Activated CD4-positive, alpha-beta T cell treated with anti-CD3 and anti-CD28 coated beads for 36 hours (primary cell): ENCODE measurements at regions of chr10 and their contacts with region 1.

Region 1: GRCh38 chr10:130190055-130190736 is 54.0 kb downstream of the GLRX3 start:
- DNase-seq: peak; percentile 93
- ATAC-seq: peak; percentile 95
- H3K4me3 Mint-ChIP-seq: no peak overlapping the region
- H3K27ac Mint-ChIP-seq: no peak overlapping the region
- H3K4me1 Mint-ChIP-seq: peaks cover 1% of the 10 kb centered on the region
- H3K27me3 Mint-ChIP-seq: peaks cover 6% of the 10 kb centered on the region

Region 2: DNA sequence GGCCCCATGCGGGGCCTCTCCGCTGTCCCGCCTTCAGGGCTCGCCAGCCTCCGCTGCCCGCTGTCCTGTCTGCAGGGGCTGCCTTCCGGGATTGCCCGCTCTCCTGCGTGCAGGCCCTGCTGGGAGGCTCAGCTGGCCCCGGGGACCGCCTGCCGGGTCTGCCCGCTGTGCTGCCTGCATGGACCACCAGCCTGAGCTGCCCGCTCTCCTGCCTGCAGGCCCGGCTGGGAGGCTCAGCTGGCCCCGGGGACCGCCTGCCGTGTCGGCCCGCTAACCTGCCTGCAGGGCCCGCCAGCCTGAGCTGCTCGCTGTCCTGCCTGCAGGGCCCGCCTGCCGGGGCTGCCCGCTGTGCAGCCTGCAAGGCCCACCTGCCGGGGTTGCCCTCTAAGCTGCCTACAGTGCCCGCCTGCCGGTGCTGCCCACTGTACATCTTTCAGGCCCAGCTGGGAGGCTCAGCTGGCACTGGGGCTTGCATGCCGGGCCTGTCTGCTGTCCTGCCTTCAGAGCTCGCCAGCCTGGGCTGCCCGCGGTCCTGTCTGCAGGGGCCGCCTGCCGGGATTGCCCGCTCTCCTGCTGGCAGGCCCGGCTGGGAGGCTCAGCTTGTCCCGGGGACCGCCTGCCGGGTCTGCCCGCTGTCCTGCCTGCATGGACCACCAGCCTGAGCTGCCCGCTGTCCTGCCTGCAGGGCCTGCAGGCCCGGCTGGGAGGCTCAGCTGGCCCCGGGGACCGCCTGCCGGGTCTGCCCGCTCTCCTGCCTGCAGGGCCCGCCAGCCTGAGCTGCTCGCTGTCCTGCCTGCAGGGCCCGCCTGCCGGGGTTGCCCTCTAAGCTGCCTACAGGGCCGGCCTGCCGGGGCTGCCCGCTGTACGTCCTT is 111.1 kb after region 1 on chr10:
- CTCF ChIA-PET with region 1: interaction called, 4 read pairs
- POLR2A ChIA-PET with region 1: no interaction called
- intact Hi-C with region 1: loop called in 1 of 2 experiments (anchors 1 kb)
- DNase-seq: peak; percentile 89
- ATAC-seq: peak; percentile 68
- H3K4me3 Mint-ChIP-seq: peak overlapping the region; percentile 80
- H3K27ac Mint-ChIP-seq: peak overlapping the region; percentile 75
- H3K4me1 Mint-ChIP-seq: peaks cover 12% of the 10 kb centered on the region
- H3K27me3 Mint-ChIP-seq: no peaks in the 10 kb centered on the region

Region 3: GRCh38 chr10:130333185-130333584 is 143.0 kb after region 1 on chr10:
- CTCF ChIA-PET with region 1: no interaction called
- POLR2A ChIA-PET with region 1: no interaction called
- intact Hi-C with region 1: loop called (anchors 1 to 10 kb)
- DNase-seq: no peak
- ATAC-seq: no peak
- H3K4me3 Mint-ChIP-seq: no peak overlapping the region
- H3K27ac Mint-ChIP-seq: no peak overlapping the region
- H3K4me1 Mint-ChIP-seq: no peaks in the 10 kb centered on the region
- H3K27me3 Mint-ChIP-seq: peaks cover 9% of the 10 kb centered on the region

Region 4: DNA sequence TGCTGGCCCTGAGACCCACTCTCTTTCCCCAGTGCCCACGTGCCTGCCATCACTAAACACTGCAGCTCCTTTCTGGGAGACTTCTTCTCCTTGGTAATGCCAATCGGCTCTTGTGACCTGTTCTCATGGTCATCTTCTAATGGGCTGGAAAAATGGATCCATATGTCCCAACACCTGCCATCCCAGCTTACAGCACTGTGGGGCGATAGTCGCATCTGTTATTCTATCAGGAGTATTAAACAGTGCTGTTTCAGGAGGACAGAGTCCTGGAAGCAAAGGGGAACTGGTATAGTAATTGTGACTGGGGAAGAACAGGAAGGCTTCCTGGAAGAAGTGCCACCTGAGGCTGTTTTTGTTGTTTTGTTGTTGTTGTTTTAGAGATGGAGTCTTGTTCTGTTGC is 357.2 kb after region 1 on chr10:
- CTCF ChIA-PET with region 1: no interaction called
- POLR2A ChIA-PET with region 1: no interaction called
- intact Hi-C with region 1: loop called in 1 of 2 experiments (anchors 5 kb)
- DNase-seq: no peak
- ATAC-seq: no peak
- H3K4me3 Mint-ChIP-seq: no peak overlapping the region
- H3K27ac Mint-ChIP-seq: no peak overlapping the region
- H3K4me1 Mint-ChIP-seq: no peaks in the 10 kb centered on the region
- H3K27me3 Mint-ChIP-seq: peaks cover 15% of the 10 kb centered on the region

Region 5: DNA sequence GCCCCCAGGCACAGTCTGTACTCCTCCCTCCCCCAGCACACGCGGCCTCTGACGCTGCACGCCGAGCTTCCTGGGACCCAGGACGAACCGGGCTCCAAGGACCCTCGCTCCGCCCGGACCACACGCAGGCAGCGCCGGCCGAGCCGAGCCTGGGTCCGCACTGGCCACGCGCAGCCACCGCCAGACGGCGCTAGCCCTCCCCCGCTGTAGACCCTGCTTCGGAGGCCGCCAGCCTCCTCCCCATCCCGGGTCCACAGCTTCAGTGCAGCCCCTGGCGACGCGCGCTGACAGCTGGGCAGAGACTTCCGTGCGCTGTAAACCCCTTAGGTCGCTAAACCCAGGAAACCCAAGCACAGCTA is 1122.3 kb after region 1 on chr10:
- CTCF ChIA-PET with region 1: interaction called, 6 read pairs
- POLR2A ChIA-PET with region 1: no interaction called
- intact Hi-C with region 1: loop called in 1 of 2 experiments (anchors 5 kb)
- DNase-seq: peak; percentile 42
- ATAC-seq: peak; percentile 25
- H3K4me3 Mint-ChIP-seq: peak overlapping the region; percentile 43
- H3K27ac Mint-ChIP-seq: no peak overlapping the region
- H3K4me1 Mint-ChIP-seq: peaks cover 4% of the 10 kb centered on the region
- H3K27me3 Mint-ChIP-seq: peaks cover 41% of the 10 kb centered on the region

Region 6: GRCh38 chr10:131874991-131875451 is 1684.8 kb after region 1 on chr10:
- CTCF ChIA-PET with region 1: no interaction called
- POLR2A ChIA-PET with region 1: no interaction called
- intact Hi-C with region 1: loop called (anchors 2 to 10 kb)
- DNase-seq: peak; percentile 86
- ATAC-seq: peak; percentile 86
- H3K4me3 Mint-ChIP-seq: no peak overlapping the region
- H3K27ac Mint-ChIP-seq: no peak overlapping the region
- H3K4me1 Mint-ChIP-seq: no peaks in the 10 kb centered on the region
- H3K27me3 Mint-ChIP-seq: peaks cover 13% of the 10 kb centered on the region